ENCODE measurements at regions of chr5 and their contacts with region 1.

Region 1: GRCh38 chr5:77491783-77492652 is at the start of gene WDR41:
- DNase-seq: peak; percentile 81
- H3K4me3 Mint-ChIP-seq: peak within 1 kb of the TSS; percentile 91
- H3K27ac Mint-ChIP-seq: peak within 1 kb of the TSS; percentile 90
- H3K4me1 Mint-ChIP-seq: peaks cover 28% of the 10 kb centered on the region
- H3K27me3 Mint-ChIP-seq: peaks cover 13% of the 10 kb centered on the region
- total RNA-seq, gene WDR41: 27.0 and 27.2 TPM in 2 replicates

Region 2: DNA sequence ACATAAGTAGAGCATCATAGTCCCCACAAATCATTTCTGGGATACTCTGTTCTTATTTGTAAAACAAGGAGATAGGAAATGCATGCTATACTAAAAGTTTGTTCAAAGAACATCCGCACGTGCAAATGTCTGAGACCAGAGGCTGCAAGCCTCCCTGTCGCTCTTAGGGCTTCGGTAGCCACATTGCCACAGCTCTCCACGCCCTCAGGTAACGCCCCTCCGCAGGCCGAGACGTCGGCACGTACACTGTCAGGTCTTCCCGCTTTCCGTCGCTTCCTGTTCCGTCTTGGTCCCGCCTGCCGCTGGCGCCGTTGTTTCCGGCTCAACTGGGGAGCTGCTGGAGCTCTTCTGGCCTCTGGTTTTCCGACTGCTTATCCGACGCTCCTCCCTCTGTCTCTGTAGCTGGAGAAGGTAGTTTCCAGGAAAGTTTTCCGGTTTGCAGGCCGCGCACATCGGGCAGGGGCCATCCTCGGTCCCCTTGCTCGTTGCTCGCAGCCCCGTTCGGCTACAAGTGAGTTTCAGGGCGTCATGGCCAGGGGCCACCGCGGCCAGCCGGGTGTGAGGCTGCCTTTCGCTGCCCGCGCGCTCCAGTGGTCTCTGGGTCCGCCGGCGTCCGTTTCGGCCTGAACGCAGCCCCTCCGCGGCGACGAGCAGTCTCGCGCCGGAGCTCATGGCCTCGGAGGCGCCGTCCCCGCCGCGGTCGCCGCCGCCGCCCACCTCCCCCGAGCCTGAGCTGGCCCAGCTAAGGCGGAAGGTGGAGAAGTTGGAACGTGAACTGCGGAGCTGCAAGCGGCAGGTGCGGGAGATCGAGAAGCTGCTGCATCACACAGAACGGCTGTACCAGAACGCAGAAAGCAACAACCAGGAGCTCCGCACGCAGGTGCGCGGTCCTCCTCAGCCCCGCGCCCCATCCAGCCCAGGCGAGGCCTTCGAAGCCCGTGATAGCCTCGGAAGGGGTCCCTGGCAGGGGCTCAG is 461.6 kb before region 1 on chr5 and contains the start of gene AGGF1:
- intact Hi-C with region 1: loop called (anchors 1 kb)
- DNase-seq: peak; percentile 87
- H3K4me3 Mint-ChIP-seq: peak within 1 kb of the TSS; percentile 90
- H3K27ac Mint-ChIP-seq: peak within 1 kb of the TSS; percentile 86
- H3K4me1 Mint-ChIP-seq: peaks cover 29% of the 10 kb centered on the region
- H3K27me3 Mint-ChIP-seq: peaks cover 4% of the 10 kb centered on the region
- total RNA-seq, gene AGGF1: 26.2 and 30.4 TPM in 2 replicates

Region 3: GRCh38 chr5:77143998-77144836 is 347.8 kb before region 1 on chr5:
- intact Hi-C with region 1: loop called (anchors 1 kb)
- DNase-seq: peak; percentile 30
- H3K4me3 Mint-ChIP-seq: no peak overlapping the region
- H3K27ac Mint-ChIP-seq: no peak overlapping the region
- H3K4me1 Mint-ChIP-seq: peaks cover 13% of the 10 kb centered on the region
- H3K27me3 Mint-ChIP-seq: peaks cover 8% of the 10 kb centered on the region

Region 4: GRCh38 chr5:77328930-77329647 is 162.9 kb before region 1 on chr5:
- intact Hi-C with region 1: loop called (anchors 1 kb)
- DNase-seq: no peak
- H3K4me3 Mint-ChIP-seq: peak overlapping the region; percentile 0
- H3K27ac Mint-ChIP-seq: peak overlapping the region; percentile 89
- H3K4me1 Mint-ChIP-seq: peaks cover 20% of the 10 kb centered on the region
- H3K27me3 Mint-ChIP-seq: peaks cover 8% of the 10 kb centered on the region

Region 5: GRCh38 chr5:77431286-77431685 is 60.7 kb before region 1 on chr5:
- intact Hi-C with region 1: loop called (anchors 5 kb)
- DNase-seq: no peak
- H3K4me3 Mint-ChIP-seq: no peak overlapping the region
- H3K27ac Mint-ChIP-seq: no peak overlapping the region
- H3K4me1 Mint-ChIP-seq: peaks cover 8% of the 10 kb centered on the region
- H3K27me3 Mint-ChIP-seq: no peaks in the 10 kb centered on the region

Region 6: DNA sequence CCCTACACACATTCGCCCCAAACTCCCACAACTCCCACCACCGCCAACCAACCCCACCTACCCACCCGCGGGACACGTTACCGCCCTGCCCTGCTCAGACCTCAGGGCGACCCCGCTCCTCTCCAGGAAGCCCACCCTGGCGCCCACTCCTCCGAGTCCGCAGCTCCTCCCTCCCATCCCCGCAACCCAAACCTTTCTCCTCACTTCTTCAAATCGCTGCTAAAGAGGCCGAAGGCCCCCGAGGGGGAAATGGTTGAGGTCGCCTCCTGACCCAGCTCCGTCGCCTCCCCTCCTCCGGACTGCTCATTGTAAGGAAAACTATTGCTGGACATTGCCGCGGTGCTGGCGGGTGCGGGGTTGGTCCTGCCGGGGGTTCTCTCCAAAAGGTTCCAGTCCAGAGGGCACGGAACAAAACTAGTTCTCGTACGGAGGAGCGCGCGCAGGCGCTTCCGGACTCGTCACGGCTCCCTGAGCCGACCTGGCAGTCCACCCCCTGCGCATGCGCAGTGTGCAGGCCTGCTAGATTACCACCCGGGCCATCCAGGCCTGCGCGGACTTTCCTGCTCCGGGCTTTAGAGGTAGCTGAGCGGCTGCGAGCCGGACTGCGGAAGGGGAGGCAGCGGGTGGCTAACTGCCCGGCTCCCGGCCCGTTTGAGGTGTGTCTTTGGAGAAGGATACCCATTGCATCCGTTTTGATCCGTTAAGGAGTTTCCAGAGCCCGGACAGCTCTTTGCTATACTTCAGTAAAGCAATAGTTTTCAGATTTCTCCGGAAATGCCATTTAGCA is 802.4 kb after region 1 on chr5 and contains the start of gene AP3B1:
- intact Hi-C with region 1: loop called (anchors 5 kb)
- DNase-seq: peak; percentile 98
- H3K4me3 Mint-ChIP-seq: peak within 1 kb of the TSS; percentile 90
- H3K27ac Mint-ChIP-seq: peak within 1 kb of the TSS; percentile 96
- H3K4me1 Mint-ChIP-seq: peaks cover 50% of the 10 kb centered on the region
- H3K27me3 Mint-ChIP-seq: peaks cover 20% of the 10 kb centered on the region
- total RNA-seq, gene AP3B1: 40.8 and 40.9 TPM in 2 replicates

Region 7: DNA sequence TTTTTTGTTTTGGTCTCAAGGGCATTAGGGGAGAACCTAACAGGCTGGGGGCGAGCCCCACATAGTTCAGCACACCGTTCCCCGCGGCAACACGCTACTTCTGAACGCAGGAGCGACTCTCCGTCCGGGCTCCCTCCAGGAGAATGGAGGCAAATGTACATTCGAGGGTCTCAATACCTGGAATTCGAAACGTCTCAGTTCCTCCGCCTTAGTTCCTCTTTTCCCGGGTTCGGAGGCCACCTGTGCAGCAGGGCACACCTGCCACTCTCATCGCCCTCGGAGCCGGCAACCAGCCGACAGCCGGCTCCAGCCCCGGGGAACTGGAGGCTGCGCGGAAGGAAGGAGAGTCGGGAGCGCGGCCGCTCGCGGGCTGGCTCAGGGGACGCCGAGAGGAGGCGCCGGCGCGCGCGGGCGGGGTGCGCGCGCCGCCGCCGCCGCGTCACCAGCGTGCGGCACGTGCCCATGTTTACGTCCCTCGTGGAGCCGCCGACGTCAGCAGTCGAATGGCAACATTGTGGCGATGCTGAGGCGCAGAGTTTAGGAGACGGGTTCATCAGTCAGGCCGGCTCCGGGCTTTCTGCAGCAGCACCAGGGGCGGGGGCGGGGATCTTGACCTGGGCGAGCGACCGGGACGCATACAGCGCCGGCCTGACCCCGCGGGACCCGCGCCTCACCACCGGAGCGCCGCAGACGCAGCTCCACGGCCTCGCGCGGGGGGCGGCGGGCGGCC is 1743.8 kb after region 1 on chr5 and contains the start of gene JMY:
- intact Hi-C with region 1: loop called (anchors 5 kb)
- DNase-seq: peak; percentile 77
- H3K4me3 Mint-ChIP-seq: peak within 1 kb of the TSS; percentile 94
- H3K27ac Mint-ChIP-seq: peak within 1 kb of the TSS; percentile 95
- H3K4me1 Mint-ChIP-seq: peaks cover 33% of the 10 kb centered on the region
- H3K27me3 Mint-ChIP-seq: peaks cover 2% of the 10 kb centered on the region
- total RNA-seq, gene JMY: 5.5 and 5.9 TPM in 2 replicates

Measured in activated T-helper 1 cell treated with anti-CD3 and anti-CD28 coated beads, Interleukin-12 subunit alpha, Interleukin-12 subunit beta, Interleukin-2, Interleukin-4 antibody, amounts not matched to agents 30 ng/mL and 10 ng/mL and 1 ng/mL, durations not matched to agents 14 hours and 24 hours and 36 hours (primary cell).